ENCODE measurements at regions of chr12 and their contacts with region 1.

Region 1: DNA sequence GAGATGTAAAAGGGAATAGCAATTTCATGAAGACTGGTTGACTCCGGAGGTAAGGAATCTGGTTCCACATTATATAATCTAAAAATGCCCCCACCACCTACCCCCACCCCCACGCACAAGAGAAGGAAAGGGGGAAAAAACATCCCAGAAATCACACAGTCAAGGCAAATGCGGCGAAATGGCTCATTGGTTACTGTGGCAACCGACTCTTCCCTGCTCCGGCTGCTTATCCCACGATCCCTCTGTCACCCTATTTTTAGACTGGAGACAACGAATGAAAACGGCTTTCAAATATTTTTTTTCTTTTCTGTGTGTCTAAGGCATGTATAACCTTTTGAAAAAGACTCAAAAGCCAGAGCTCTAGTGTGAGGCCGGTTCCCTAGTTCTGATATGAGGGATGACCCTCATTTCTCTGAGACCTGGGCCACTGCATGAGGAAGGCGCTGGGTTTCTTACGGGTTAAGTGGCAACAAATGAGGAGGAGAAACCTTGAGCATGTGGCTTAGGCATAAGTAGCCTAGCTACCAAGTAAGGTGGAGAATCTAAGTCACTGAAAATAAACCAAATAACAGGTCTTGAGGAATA is 148.3 kb upstream of the GRIN2B start:
- DNase-seq: no peak
- ATAC-seq: no peak
- H3K4me3 ChIP-seq: no peak overlapping the region
- H3K27ac ChIP-seq: no peak overlapping the region
- H3K4me1 ChIP-seq: no peaks in the 10 kb centered on the region
- H3K27me3 ChIP-seq: no peaks in the 10 kb centered on the region
- CTCF ChIP-seq: no peak
- POLR2A ChIP-seq: no peak
- RAD21 ChIP-seq: no peak

Region 2: DNA sequence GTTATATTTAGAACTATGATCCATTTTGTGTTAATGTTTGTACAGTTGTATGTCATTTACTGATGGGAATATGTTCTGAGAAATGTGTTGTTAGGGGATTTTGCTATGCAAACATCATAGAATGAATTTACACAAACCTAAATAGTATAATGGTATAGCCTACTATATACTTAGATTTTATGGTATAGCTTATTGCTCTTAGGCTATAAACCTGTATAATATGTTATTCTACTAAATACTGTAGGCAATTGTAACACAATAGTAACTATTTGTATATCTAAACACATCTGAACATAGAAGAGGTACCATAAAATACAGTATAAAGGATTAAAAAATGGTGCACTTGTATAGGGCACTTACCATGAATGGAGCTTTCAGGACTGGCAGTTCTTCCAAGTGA is 42.9 kb before region 1 on chr12:
- CTCF ChIA-PET with region 1: no interaction called
- POLR2A ChIA-PET with region 1: no interaction called
- dilution Hi-C with region 1: no loop called
- in situ Hi-C with region 1: no loop called
- intact Hi-C with region 1: loop called (anchors 2 kb)
- DNase-seq: no peak
- ATAC-seq: no peak
- H3K4me3 ChIP-seq: no peak overlapping the region
- H3K27ac ChIP-seq: no peak overlapping the region
- H3K4me1 ChIP-seq: no peaks in the 10 kb centered on the region
- H3K27me3 ChIP-seq: no peaks in the 10 kb centered on the region
- CTCF ChIP-seq: no peak
- POLR2A ChIP-seq: no peak
- RAD21 ChIP-seq: no peak

Region 3: DNA sequence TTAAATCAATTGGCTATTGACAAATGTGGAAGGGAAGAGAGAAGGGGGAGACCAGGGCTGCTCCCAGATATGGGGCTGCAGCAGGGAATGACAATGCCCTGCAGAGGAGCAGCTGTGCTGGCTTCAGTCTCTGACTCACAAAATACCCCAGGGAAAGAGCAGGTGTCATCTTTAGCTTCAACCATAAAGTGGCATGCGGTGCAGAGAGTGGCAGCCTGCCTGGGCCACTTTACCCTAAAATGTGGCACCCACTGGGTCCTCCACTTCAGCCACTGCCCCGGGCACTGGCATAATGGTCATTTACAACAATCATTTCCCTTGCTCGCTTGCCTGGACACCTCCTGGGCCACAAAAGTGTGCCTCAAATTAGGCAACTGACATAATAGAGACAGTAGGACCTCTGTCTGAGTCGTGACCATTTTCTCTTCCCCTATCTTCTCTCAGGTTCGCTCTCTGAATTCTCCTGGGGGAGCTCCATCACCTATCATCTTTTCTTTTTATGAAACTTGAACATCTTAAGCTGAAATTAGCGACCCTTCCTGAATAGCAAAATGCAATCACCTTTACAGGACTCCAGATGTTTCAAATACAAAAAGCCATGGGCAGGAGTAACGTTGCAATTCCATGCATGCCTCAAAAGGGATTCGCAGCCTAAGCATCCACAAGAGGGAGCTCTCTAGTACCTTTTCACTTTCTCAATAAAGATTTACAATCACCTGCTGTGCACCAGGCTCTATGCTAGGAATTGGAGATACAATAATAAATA is 55.9 kb after region 1 on chr12:
- CTCF ChIA-PET with region 1: no interaction called
- POLR2A ChIA-PET with region 1: no interaction called
- dilution Hi-C with region 1: no loop called
- in situ Hi-C with region 1: no loop called
- intact Hi-C with region 1: no loop called
- DNase-seq: peak; percentile 38
- ATAC-seq: peak; percentile 83
- H3K4me3 ChIP-seq: no peak overlapping the region
- H3K27ac ChIP-seq: no peak overlapping the region
- H3K4me1 ChIP-seq: no peaks in the 10 kb centered on the region
- H3K27me3 ChIP-seq: no peaks in the 10 kb centered on the region
- CTCF ChIP-seq: peak; percentile 62
- POLR2A ChIP-seq: no peak
- RAD21 ChIP-seq: peak; percentile 50; the same call in 1 of the 2 replicates

Measured in IMR-90 (cell line).